Calu3 (cell line): ENCODE measurements at regions of chr16 and their contacts with region 1.

Region 1: GRCh38 chr16:53781023-53781605 is 77.2 kb downstream of the FTO start:
- DNase-seq: peak; percentile 28
- H3K4me3 Mint-ChIP-seq: peak overlapping the region; percentile 9
- H3K27ac Mint-ChIP-seq: peak overlapping the region; percentile 43
- H3K4me1 Mint-ChIP-seq: peaks cover 69% of the 10 kb centered on the region
- H3K27me3 Mint-ChIP-seq: no peaks in the 10 kb centered on the region
- CTCF ChIP-seq: no peak

Region 2: GRCh38 chr16:53503270-53503923 is 277.7 kb before region 1 on chr16:
- CTCF ChIA-PET with region 1: no interaction called
- intact Hi-C with region 1: no loop called
- DNase-seq: peak; percentile 100
- H3K4me3 Mint-ChIP-seq: peak overlapping the region; percentile 89
- H3K27ac Mint-ChIP-seq: peak overlapping the region; percentile 75
- H3K4me1 Mint-ChIP-seq: peaks cover 33% of the 10 kb centered on the region
- H3K27me3 Mint-ChIP-seq: no peaks in the 10 kb centered on the region
- CTCF ChIP-seq: no peak

Region 3: GRCh38 chr16:53817117-53817755 is 36.1 kb after region 1 on chr16:
- CTCF ChIA-PET with region 1: interaction called, 4 read pairs
- intact Hi-C with region 1: loop called (anchors 5 kb)
- DNase-seq: no peak
- H3K4me3 Mint-ChIP-seq: no peak overlapping the region
- H3K27ac Mint-ChIP-seq: no peak overlapping the region
- H3K4me1 Mint-ChIP-seq: peaks cover 9% of the 10 kb centered on the region
- H3K27me3 Mint-ChIP-seq: no peaks in the 10 kb centered on the region
- CTCF ChIP-seq: no peak

Region 4: GRCh38 chr16:53827741-53828140 is 46.6 kb after region 1 on chr16:
- CTCF ChIA-PET with region 1: no interaction called
- intact Hi-C with region 1: loop called (anchors 2 kb)
- DNase-seq: no peak
- H3K4me3 Mint-ChIP-seq: no peak overlapping the region
- H3K27ac Mint-ChIP-seq: no peak overlapping the region
- H3K4me1 Mint-ChIP-seq: peaks cover 11% of the 10 kb centered on the region
- H3K27me3 Mint-ChIP-seq: no peaks in the 10 kb centered on the region
- CTCF ChIP-seq: no peak